ENCODE measurements at regions of chr1 and their contacts with region 1.

Region 1: GRCh38 chr1:15526490-15527339 is at the start of gene DNAJC16:
- DNase-seq: peak; percentile 99
- H3K4me3 Mint-ChIP-seq: peak within 1 kb of the TSS; percentile 95
- H3K27ac Mint-ChIP-seq: peak within 1 kb of the TSS; percentile 99
- H3K4me1 Mint-ChIP-seq: peaks cover 51% of the 10 kb centered on the region
- H3K27me3 Mint-ChIP-seq: no peaks in the 10 kb centered on the region
- total RNA-seq, gene DNAJC16: 7.1 to 9.8 TPM

Region 2: GRCh38 chr1:15251857-15252835 is 274.6 kb before region 1 on chr1:
- CTCF ChIA-PET with region 1: no interaction called
- intact Hi-C with region 1: loop called (anchors 5 kb)
- DNase-seq: no peak
- H3K4me3 Mint-ChIP-seq: no peak overlapping the region
- H3K27ac Mint-ChIP-seq: peak overlapping the region; percentile 74
- H3K4me1 Mint-ChIP-seq: peaks cover 54% of the 10 kb centered on the region
- H3K27me3 Mint-ChIP-seq: peaks cover 21% of the 10 kb centered on the region

Region 3: GRCh38 chr1:15578921-15579682 is 52.4 kb after region 1 on chr1:
- CTCF ChIA-PET with region 1: interaction called, 6 read pairs
- intact Hi-C with region 1: loop called (anchors 1 kb)
- DNase-seq: peak; percentile 66
- H3K4me3 Mint-ChIP-seq: peak overlapping the region; percentile 51
- H3K27ac Mint-ChIP-seq: peak overlapping the region; percentile 92
- H3K4me1 Mint-ChIP-seq: peaks cover 55% of the 10 kb centered on the region
- H3K27me3 Mint-ChIP-seq: no peaks in the 10 kb centered on the region

Region 4: DNA sequence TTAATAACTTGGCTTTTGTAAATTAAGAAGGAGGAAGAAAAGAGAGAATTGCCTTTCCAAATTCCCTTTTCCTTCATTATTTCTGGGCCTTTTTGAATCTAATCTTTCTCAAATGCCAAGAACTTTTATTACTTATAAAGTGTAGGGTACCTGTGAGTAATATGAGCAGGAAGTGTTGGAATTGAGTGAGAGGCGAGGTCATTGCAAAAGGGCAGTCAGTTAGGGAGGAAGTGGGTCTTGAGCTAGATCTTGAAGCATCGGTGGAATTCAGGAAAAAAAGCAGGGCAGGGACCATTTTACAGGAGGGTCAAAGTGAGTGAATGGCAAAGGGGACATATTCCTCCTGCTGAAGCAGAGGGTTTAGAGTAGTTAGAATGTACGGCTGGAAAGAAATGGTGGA is 114.0 kb after region 1 on chr1:
- CTCF ChIA-PET with region 1: no interaction called
- intact Hi-C with region 1: no loop called
- DNase-seq: no peak
- H3K4me3 Mint-ChIP-seq: no peak overlapping the region
- H3K27ac Mint-ChIP-seq: no peak overlapping the region
- H3K4me1 Mint-ChIP-seq: no peaks in the 10 kb centered on the region
- H3K27me3 Mint-ChIP-seq: no peaks in the 10 kb centered on the region

Region 5: GRCh38 chr1:15684468-15685291 is 158.0 kb after region 1 on chr1:
- CTCF ChIA-PET with region 1: no interaction called
- intact Hi-C with region 1: loop called (anchors 1 kb)
- DNase-seq: peak; percentile 61
- H3K4me3 Mint-ChIP-seq: peak overlapping the region; percentile 85
- H3K27ac Mint-ChIP-seq: peak overlapping the region; percentile 85
- H3K4me1 Mint-ChIP-seq: peaks cover 45% of the 10 kb centered on the region
- H3K27me3 Mint-ChIP-seq: no peaks in the 10 kb centered on the region

Region 6: GRCh38 chr1:15966081-15966955 is 439.6 kb after region 1 on chr1:
- CTCF ChIA-PET with region 1: no interaction called
- intact Hi-C with region 1: loop called (anchors 2 kb)
- DNase-seq: peak; percentile 94
- H3K4me3 Mint-ChIP-seq: peak overlapping the region; percentile 68
- H3K27ac Mint-ChIP-seq: peak overlapping the region; percentile 97
- H3K4me1 Mint-ChIP-seq: peaks cover 80% of the 10 kb centered on the region
- H3K27me3 Mint-ChIP-seq: no peaks in the 10 kb centered on the region

Region 7: GRCh38 chr1:16904560-16905111 is 1377.9 kb after region 1 on chr1:
- CTCF ChIA-PET with region 1: no interaction called
- intact Hi-C with region 1: loop called (anchors 2 kb)
- DNase-seq: peak; percentile 100
- H3K4me3 Mint-ChIP-seq: no peak overlapping the region
- H3K27ac Mint-ChIP-seq: no peak overlapping the region
- H3K4me1 Mint-ChIP-seq: peaks cover 32% of the 10 kb centered on the region
- H3K27me3 Mint-ChIP-seq: no peaks in the 10 kb centered on the region

Measured in activated naive CD4-positive, alpha-beta T cell treated with anti-CD3 and anti-CD28 coated beads for 36 hours (primary cell).